ENCODE measurements at regions of chrX and their contacts with region 1.

Region 1: GRCh38 chrX:138775517-138775916 is 64.0 kb upstream of the FGF13 start:
- DNase-seq: no peak
- ATAC-seq: peak; percentile 72; the same call in 1 of the 2 replicates
- H3K4me3 ChIP-seq: no peak overlapping the region
- H3K27ac ChIP-seq: no peak overlapping the region
- H3K4me1 ChIP-seq: no peaks in the 10 kb centered on the region
- H3K27me3 ChIP-seq: no peaks in the 10 kb centered on the region
- CTCF ChIP-seq: peak; percentile 59; the same call in 1 of the 2 replicates

Region 2: GRCh38 chrX:139559383-139560042 is 784.0 kb after region 1 on chrX:
- CTCF ChIA-PET with region 1: no interaction called
- POLR2A ChIA-PET with region 1: no interaction called
- in situ Hi-C with region 1: no loop called
- intact Hi-C with region 1: loop called (anchors 5 kb)
- DNase-seq: peak; percentile 46
- ATAC-seq: peak; percentile 89
- H3K4me3 ChIP-seq: no peak overlapping the region
- H3K27ac ChIP-seq: no peak overlapping the region
- H3K4me1 ChIP-seq: no peaks in the 10 kb centered on the region
- H3K27me3 ChIP-seq: no peaks in the 10 kb centered on the region; the same call in 1 of the 2 replicates
- CTCF ChIP-seq: peak; percentile 68

Region 3: DNA sequence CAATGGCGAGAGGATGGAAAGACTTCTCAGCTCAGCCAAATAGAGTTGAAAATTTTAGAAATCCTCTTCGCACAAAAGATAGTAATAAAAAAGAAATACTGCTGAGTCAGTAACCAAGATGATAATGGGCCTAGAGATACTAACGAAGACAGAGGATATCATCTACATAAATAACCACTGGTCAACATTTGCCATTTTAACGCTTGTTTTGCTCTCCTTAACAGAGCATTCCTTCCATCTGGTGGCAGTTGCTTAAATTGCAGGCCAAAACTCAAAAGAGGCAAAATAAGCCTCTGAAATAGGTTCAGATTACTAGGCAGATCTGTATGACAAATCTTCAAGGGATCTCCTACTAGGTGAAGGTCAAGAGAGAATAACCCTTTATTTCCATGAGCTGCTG is 984.1 kb after region 1 on chrX:
- CTCF ChIA-PET with region 1: no interaction called
- POLR2A ChIA-PET with region 1: no interaction called
- in situ Hi-C with region 1: no loop called
- intact Hi-C with region 1: loop called (anchors 10 kb)
- DNase-seq: peak; percentile 17
- ATAC-seq: 0 out of 2 replicates have a peak, but pooled peaks have one; percentile 53
- H3K4me3 ChIP-seq: no peak overlapping the region
- H3K27ac ChIP-seq: no peak overlapping the region
- H3K4me1 ChIP-seq: no peaks in the 10 kb centered on the region
- H3K27me3 ChIP-seq: no peaks in the 10 kb centered on the region
- CTCF ChIP-seq: peak; percentile 62

Region 4: GRCh38 chrX:139971394-139971749 is 1195.9 kb after region 1 on chrX:
- CTCF ChIA-PET with region 1: interaction called, 6 read pairs
- POLR2A ChIA-PET with region 1: no interaction called
- in situ Hi-C with region 1: no loop called
- intact Hi-C with region 1: loop called (anchors 5 kb)
- DNase-seq: no peak
- ATAC-seq: peak; percentile 21; the same call in 1 of the 2 replicates
- H3K4me3 ChIP-seq: peak overlapping the region; percentile 14 to 34
- H3K27ac ChIP-seq: no peak overlapping the region
- H3K4me1 ChIP-seq: no peaks in the 10 kb centered on the region
- H3K27me3 ChIP-seq: peaks cover 2% of the 10 kb centered on the region; the same call in 1 of the 2 replicates
- CTCF ChIP-seq: no peak